Right ventricle myocardium inferior (tissue), 1 donor: ENCODE measurements at regions of chr18 and their contacts with region 1.

Region 1: GRCh38 chr18:31225668-31226067 is 63.0 kb upstream of the DSC1 start:
- DNase-seq: peak; percentile 78
- ATAC-seq: peak; percentile 93

Region 2: GRCh38 chr18:31190919-31191318 is 34.7 kb before region 1 on chr18:
- intact Hi-C with region 1: loop called (anchors 5 kb)
- DNase-seq: no peak
- ATAC-seq: no peak